Mammary epithelial cell (primary cell): ENCODE measurements at regions of chr3 and their contacts with region 1.

Region 1: GRCh38 chr3:50138266-50139200 is 16.6 kb upstream of the SEMA3F start:
- DNase-seq: no peak
- H3K4me3 ChIP-seq: no peak overlapping the region
- H3K27ac ChIP-seq: no peak overlapping the region
- H3K4me1 ChIP-seq: peaks cover 15% of the 10 kb centered on the region
- H3K27me3 ChIP-seq: no peaks in the 10 kb centered on the region
- CTCF ChIP-seq: no peak

Region 2: GRCh38 chr3:50260027-50260941 is 121.8 kb after region 1 on chr3:
- CTCF ChIA-PET with region 1: interaction called, 19 read pairs
- dilution Hi-C with region 1: no loop called
- in situ Hi-C with region 1: no loop called
- intact Hi-C with region 1: no loop called
- DNase-seq: peak; percentile 86
- H3K4me3 ChIP-seq: peak overlapping the region; percentile 32 to 52 (median 41)
- H3K27ac ChIP-seq: peak overlapping the region; percentile 54
- H3K4me1 ChIP-seq: peaks cover 35% of the 10 kb centered on the region
- H3K27me3 ChIP-seq: no peaks in the 10 kb centered on the region
- CTCF ChIP-seq: peak; percentile 77 to 91